Calu3 (cell line): ENCODE measurements at regions of chr3 and their contacts with region 1.

Region 1: GRCh38 chr3:176939022-176939817 is 258.1 kb downstream of the TBL1XR1 start:
- DNase-seq: peak; percentile 82
- H3K4me3 Mint-ChIP-seq: no peak overlapping the region
- H3K27ac Mint-ChIP-seq: no peak overlapping the region
- H3K4me1 Mint-ChIP-seq: no peaks in the 10 kb centered on the region
- H3K27me3 Mint-ChIP-seq: no peaks in the 10 kb centered on the region
- CTCF ChIP-seq: peak; percentile 95

Region 2: GRCh38 chr3:176439729-176440128 is 499.5 kb before region 1 on chr3:
- CTCF ChIA-PET with region 1: no interaction called
- intact Hi-C with region 1: loop called (anchors 5 kb)
- DNase-seq: no peak
- H3K4me3 Mint-ChIP-seq: no peak overlapping the region
- H3K27ac Mint-ChIP-seq: no peak overlapping the region
- H3K4me1 Mint-ChIP-seq: no peaks in the 10 kb centered on the region
- H3K27me3 Mint-ChIP-seq: no peaks in the 10 kb centered on the region
- CTCF ChIP-seq: no peak

Region 3: DNA sequence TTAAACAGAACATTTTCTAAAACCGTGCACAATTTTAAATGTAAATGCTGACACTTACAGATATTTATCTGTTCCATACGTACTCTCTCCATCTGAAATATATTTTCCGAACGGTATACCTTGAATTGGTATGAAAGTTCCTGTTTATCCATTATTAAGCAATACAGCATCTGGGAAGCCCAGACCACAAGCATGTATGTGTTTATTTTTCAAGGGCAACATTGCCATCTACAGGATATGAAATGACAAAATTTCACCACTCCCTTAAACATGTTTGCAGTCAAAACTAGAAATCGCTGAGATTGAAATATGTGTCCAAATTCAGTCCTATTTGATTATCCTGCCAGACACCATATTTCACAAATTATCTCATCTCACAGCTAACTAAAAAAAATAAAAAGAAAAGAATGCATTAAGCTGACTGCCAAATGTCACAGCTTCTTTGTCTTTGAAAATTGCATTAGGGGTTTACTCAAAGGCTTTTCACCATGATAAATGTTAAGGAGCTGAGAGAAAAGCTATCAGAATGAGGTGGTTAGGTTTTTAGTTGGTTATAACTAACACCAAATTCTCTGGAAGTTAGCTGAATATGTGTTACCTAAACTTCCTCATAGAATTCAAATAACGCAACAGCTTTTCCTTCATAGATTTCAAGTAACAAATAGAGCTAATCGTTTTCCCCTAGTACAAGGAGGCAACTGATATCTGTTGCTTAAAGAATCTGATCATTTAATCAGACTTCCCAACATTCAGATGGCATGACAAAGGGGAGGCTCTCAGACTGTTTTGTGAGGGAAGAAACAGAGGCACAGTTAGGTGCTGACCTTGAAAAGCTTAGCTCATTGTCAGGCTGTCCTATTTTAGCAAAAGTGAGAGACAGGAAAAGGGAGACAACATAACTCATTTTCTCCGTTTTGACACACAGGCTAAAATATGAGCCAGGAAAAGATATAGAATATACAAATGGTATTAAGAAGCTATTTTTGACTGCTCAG is 275.1 kb before region 1 on chr3:
- CTCF ChIA-PET with region 1: no interaction called
- intact Hi-C with region 1: loop called (anchors 2 kb)
- DNase-seq: peak; percentile 18
- H3K4me3 Mint-ChIP-seq: no peak overlapping the region
- H3K27ac Mint-ChIP-seq: no peak overlapping the region
- H3K4me1 Mint-ChIP-seq: peaks cover 9% of the 10 kb centered on the region
- H3K27me3 Mint-ChIP-seq: no peaks in the 10 kb centered on the region
- CTCF ChIP-seq: peak; percentile 21

Region 4: DNA sequence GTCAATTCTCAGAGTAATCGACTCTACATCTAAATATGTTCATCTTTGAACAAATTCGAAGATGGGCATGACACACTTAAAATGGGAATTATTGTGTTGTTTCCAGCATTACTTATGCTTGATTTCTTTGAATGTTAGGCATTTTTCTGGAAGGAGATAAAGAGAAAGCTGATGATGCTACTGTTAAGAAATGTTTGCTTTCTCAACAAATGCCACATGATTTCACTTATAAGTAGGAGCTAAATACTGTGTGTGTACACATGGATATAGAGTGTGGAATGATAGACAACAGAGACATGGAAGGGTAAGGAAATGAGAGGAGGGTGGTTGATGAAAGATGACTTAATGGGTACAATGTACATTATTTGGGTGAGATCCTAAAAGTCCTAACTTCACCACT is 142.8 kb before region 1 on chr3:
- CTCF ChIA-PET with region 1: no interaction called
- intact Hi-C with region 1: loop called (anchors 2 kb)
- DNase-seq: no peak
- H3K4me3 Mint-ChIP-seq: no peak overlapping the region
- H3K27ac Mint-ChIP-seq: no peak overlapping the region
- H3K4me1 Mint-ChIP-seq: peaks cover 28% of the 10 kb centered on the region
- H3K27me3 Mint-ChIP-seq: no peaks in the 10 kb centered on the region
- CTCF ChIP-seq: no peak

Region 5: DNA sequence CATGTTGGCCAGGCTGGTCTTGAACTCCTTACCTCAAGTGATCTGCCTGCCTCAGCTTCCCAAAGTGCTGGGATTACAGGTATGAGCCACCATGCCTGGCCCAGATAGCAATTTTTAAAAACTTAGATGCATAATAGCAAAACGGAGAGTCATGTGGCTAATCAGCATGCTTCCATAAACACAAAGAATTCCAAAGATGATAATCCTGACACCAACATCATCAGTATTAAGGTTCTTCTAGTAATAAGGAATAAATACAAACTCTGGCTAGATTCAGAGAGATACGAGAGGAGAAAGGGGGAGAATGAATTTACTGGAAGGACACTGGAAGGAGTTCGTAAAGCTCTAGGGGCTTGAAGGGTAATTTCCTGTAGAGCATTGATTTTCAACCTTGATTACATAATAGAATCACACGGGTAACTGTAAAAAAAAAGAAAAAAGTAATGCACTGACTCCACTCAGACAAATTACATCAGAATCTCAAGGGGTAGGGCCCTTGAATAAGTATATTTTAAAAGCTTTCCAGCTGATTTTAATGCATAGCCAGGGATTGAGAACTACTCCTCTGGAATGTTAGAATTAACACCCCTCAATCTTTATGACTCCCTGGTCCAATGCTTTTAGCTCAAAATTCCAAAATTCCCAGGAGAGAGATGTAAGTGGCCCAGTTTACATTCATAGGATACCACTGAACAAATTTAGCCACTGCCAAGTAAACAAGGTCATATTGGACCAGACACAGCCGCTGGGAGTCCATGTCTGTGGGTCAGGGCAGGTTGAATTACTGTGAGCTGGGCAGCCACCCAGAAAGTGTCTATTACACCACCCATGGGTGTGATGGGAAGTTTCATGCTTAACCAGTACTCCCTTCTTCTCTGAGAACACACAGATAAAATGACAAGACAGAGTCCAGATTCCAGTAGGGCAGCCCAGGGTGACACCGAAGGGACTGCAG is 14.2 kb after region 1 on chr3:
- CTCF ChIA-PET with region 1: no interaction called
- intact Hi-C with region 1: no loop called
- DNase-seq: no peak
- H3K4me3 Mint-ChIP-seq: no peak overlapping the region
- H3K27ac Mint-ChIP-seq: no peak overlapping the region
- H3K4me1 Mint-ChIP-seq: peaks cover 18% of the 10 kb centered on the region
- H3K27me3 Mint-ChIP-seq: no peaks in the 10 kb centered on the region
- CTCF ChIP-seq: no peak

Region 6: DNA sequence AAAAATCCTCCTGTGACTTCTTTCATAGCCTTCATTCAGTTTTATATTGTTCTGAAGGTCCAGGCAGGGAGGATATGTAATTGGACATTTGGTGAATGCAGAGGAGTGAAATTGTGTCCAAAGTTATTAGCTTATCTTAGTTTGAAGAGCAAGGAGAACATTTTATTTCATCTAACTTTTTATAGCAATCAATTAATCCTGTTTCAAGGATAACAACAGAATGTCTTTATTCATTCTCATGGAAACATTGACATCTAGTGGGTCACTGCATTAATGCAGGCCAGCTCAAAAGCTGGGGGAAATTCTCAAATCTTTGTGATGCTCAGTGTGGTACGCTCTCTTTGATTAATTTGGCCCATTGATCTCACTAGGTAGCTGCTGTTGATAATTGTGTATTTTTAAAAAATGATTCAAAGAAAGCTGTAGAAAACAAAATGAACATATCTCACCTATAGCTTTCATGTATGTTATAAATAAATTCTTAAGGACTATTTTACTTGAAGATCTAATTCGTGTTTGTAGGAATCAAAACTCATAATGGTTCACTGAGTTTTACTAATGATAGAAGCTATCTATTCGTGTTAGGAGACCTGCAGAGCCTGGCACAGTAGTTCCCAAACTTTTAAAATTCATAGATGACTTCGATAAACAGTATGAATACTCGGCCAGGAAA is 1446.2 kb after region 1 on chr3:
- CTCF ChIA-PET with region 1: interaction called, 4 read pairs
- intact Hi-C with region 1: loop called (anchors 1 kb)
- DNase-seq: peak; percentile 61
- H3K4me3 Mint-ChIP-seq: no peak overlapping the region
- H3K27ac Mint-ChIP-seq: no peak overlapping the region
- H3K4me1 Mint-ChIP-seq: no peaks in the 10 kb centered on the region
- H3K27me3 Mint-ChIP-seq: no peaks in the 10 kb centered on the region
- CTCF ChIP-seq: peak; percentile 78